Calu3 (cell line): ENCODE measurements at regions of chr4 and their contacts with region 1.

Region 1: GRCh38 chr4:87006676-87007527 is 72.1 kb downstream of the AFF1 start:
- DNase-seq: peak; percentile 86
- H3K4me3 Mint-ChIP-seq: peak overlapping the region; percentile 89
- H3K27ac Mint-ChIP-seq: peak overlapping the region; percentile 92
- H3K4me1 Mint-ChIP-seq: peaks cover 18% of the 10 kb centered on the region
- H3K27me3 Mint-ChIP-seq: no peaks in the 10 kb centered on the region
- CTCF ChIP-seq: no peak

Region 2: DNA sequence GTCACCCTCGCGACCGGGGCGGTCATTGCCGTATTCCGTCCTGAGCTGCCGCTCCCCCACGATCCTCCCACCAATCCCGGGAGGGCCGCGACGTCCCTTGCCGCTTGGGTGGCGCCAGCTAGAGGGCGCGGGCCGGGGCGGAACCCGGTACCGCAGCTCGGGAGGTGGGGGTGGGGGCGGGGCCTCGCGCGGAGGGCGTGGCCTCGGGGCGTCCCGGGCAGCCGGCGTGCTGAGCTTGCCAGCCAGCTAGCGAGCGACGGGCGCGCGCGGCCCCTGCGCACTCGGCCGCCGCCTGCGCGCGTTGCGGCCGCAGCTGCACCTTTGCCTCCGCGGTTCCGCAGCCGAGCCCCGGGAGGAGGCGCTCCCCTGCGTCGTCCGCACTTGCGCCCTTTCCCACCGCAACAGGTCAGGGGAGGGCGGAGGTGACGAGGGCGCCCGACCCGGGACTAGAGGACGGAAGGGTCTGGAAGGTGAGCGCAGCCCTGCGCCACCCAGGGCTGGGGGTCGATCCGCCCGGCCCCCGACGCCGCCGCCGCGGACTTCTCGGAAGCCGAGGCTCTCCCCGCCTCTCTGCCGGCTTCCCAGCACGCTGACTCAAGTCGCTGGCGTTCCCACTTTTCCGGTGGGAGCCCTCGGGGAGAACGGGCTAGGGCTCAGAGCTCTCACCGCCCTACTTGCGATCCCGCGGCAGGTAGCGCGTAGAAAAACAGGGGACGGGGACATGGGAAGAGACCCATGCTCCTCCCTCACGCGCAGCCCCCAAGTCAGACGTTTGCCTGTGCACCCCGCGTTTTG is 71.9 kb before region 1 on chr4 and contains the start of gene AFF1:
- CTCF ChIA-PET with region 1: interaction called, 7 read pairs
- intact Hi-C with region 1: loop called (anchors 5 kb)
- DNase-seq: peak; percentile 88
- H3K4me3 Mint-ChIP-seq: peak within 1 kb of the TSS; percentile 91
- H3K27ac Mint-ChIP-seq: peak within 1 kb of the TSS; percentile 96
- H3K4me1 Mint-ChIP-seq: peaks cover 18% of the 10 kb centered on the region
- H3K27me3 Mint-ChIP-seq: no peaks in the 10 kb centered on the region
- CTCF ChIP-seq: no peak
- total RNA-seq, gene AFF1: 37.7 and 40.2 TPM in 2 replicates

Region 3: GRCh38 chr4:86977621-86978184 is 29.2 kb before region 1 on chr4:
- CTCF ChIA-PET with region 1: interaction called, 4 read pairs
- intact Hi-C with region 1: loop called (anchors 5 kb)
- DNase-seq: peak; percentile 57
- H3K4me3 Mint-ChIP-seq: peak overlapping the region; percentile 43
- H3K27ac Mint-ChIP-seq: peak overlapping the region; percentile 76
- H3K4me1 Mint-ChIP-seq: peaks cover 44% of the 10 kb centered on the region
- H3K27me3 Mint-ChIP-seq: no peaks in the 10 kb centered on the region
- CTCF ChIP-seq: no peak

Region 4: GRCh38 chr4:87043044-87043820 is 36.3 kb after region 1 on chr4:
- CTCF ChIA-PET with region 1: no interaction called
- intact Hi-C with region 1: loop called (anchors 5 kb)
- DNase-seq: no peak
- H3K4me3 Mint-ChIP-seq: no peak overlapping the region
- H3K27ac Mint-ChIP-seq: no peak overlapping the region
- H3K4me1 Mint-ChIP-seq: peaks cover 8% of the 10 kb centered on the region
- H3K27me3 Mint-ChIP-seq: no peaks in the 10 kb centered on the region
- CTCF ChIP-seq: no peak

Region 5: GRCh38 chr4:87058356-87059073 is 51.6 kb after region 1 on chr4:
- CTCF ChIA-PET with region 1: no interaction called
- intact Hi-C with region 1: loop called (anchors 5 kb)
- DNase-seq: peak; percentile 22
- H3K4me3 Mint-ChIP-seq: no peak overlapping the region
- H3K27ac Mint-ChIP-seq: peak overlapping the region; percentile 11
- H3K4me1 Mint-ChIP-seq: peaks cover 30% of the 10 kb centered on the region
- H3K27me3 Mint-ChIP-seq: no peaks in the 10 kb centered on the region
- CTCF ChIP-seq: no peak

Region 6: DNA sequence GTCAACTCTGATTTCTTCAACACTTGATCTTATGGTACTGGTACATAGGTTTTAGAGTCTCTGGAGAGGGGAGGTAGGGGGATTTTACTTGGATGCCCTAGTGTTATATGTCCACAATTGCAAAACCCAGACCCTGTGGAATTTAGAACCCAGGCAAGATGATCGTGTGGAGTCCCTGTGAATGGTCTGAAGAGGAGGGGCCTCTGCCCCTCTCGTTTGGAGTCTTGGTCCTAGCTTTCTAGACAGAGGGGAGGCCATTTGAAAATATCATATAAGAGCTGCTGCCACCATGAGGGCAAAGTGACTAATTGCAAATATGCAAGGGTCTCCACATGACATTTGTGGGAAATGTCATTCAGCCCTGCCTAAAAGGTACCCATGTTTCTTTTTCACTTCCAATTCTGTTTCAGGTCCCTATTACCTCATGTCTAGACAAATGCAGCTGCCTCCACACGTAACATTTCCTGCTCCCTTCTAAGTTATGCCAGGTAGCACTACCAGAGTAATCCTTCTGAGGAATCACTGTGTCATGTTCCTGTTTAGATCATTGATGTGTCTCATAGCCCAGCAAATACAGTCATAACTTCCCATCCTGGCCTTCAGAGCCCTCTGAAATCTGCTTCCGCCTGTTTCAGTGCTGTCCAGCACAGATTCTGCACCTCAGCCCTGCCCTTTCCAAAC is 86.7 kb after region 1 on chr4:
- CTCF ChIA-PET with region 1: interaction called, 7 read pairs
- intact Hi-C with region 1: loop called (anchors 5 kb)
- DNase-seq: peak; percentile 25
- H3K4me3 Mint-ChIP-seq: no peak overlapping the region
- H3K27ac Mint-ChIP-seq: no peak overlapping the region
- H3K4me1 Mint-ChIP-seq: peaks cover 25% of the 10 kb centered on the region
- H3K27me3 Mint-ChIP-seq: no peaks in the 10 kb centered on the region
- CTCF ChIP-seq: peak; percentile 41